PC-9 (cell line): ENCODE measurements at regions of chr14 and their contacts with region 1.

Region 1: DNA sequence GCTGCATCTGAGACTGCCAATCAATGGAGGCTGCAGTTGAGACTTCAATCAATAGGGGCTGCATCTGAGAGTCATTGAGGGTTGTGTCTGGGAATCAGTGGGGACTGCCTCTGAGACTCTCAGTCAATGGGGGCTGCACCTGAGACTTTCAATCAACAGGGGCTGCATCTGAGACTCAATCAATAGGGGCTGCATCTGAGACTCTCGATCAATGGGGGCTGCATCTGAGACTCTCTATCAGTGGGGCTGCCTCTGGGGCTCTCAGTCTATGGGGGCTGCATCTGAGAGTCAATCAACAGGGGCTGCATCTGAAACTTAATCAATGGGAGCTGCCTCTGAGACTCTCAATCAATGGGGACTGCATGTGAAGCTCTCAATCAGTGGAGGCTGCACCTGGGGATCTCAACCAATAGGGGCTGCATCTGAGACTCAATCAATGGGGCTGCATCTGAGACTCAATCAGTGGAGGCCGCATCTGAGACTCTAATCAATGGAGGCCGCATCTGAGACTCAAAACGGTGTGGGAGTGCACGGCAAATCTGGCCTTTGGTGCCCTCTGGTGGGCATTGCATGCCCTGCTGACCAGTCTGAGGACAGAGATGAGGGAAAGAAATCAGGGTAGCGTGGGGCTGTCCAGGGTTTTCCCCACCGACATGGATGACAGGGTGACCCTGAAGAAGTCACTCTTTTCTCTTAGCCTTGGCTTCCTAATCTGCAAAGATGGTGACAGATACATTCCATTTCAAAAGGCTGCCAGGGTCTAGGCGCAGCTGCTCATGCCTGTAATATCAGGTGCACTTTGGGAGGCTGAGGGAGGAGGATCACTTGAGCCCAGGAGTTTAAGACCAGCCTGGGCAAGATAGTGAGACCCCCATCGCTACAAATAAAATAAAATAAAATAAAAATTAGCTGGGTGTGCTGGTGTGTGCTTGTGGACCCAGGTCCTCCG is 41.3 kb upstream of the EIF5 start:
- DNase-seq: peak; percentile 68 to 90
- H3K4me3 ChIP-seq: no peak overlapping the region
- H3K27ac ChIP-seq: no peak overlapping the region
- H3K4me1 ChIP-seq: peaks cover 34% of the 10 kb centered on the region
- H3K27me3 ChIP-seq: no peaks in the 10 kb centered on the region
- CTCF ChIP-seq: peak; percentile 100

Region 2: GRCh38 chr14:101665515-101666078 is 1627.1 kb before region 1 on chr14:
- CTCF ChIA-PET with region 1: no interaction called
- POLR2A ChIA-PET with region 1: no interaction called
- intact Hi-C with region 1: loop called (anchors 10 kb)
- DNase-seq: peak; percentile 71 to 81
- H3K4me3 ChIP-seq: no peak overlapping the region
- H3K27ac ChIP-seq: no peak overlapping the region
- H3K4me1 ChIP-seq: no peaks in the 10 kb centered on the region
- H3K27me3 ChIP-seq: no peaks in the 10 kb centered on the region
- CTCF ChIP-seq: peak; percentile 99

Region 3: DNA sequence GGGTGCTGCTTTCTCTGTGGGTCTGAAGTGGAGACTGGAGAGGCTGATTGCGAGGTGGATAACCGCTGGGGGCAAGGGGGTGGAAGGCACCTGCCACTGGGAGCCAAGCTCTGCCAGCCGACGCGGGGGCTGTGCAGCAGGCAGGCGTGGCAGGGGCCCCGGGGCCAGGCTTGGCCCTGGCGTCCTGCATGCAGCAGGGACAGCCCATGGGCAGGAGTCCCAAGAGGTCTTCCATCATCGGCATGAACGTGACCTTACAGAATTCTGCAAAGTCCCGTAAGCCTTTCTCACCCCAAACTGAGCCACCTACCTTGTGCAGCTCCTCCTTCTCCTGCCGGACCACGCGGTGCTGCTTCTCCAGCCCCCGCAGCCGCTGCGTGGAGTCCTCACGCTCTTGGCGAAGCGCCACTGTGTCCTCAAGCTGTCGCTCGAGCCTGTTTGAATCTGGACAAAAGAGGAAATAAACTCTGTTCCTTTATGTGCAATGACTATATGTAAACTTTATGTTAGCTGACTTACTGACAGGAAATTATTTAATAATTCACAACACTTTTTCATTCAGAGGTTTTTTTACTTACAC is 318.9 kb before region 1 on chr14:
- CTCF ChIA-PET with region 1: no interaction called
- POLR2A ChIA-PET with region 1: interaction called, 3 read pairs
- intact Hi-C with region 1: loop called (anchors 5 kb)
- DNase-seq: no peak
- H3K4me3 ChIP-seq: no peak overlapping the region
- H3K27ac ChIP-seq: no peak overlapping the region
- H3K4me1 ChIP-seq: no peaks in the 10 kb centered on the region
- H3K27me3 ChIP-seq: no peaks in the 10 kb centered on the region
- CTCF ChIP-seq: no peak

Region 4: DNA sequence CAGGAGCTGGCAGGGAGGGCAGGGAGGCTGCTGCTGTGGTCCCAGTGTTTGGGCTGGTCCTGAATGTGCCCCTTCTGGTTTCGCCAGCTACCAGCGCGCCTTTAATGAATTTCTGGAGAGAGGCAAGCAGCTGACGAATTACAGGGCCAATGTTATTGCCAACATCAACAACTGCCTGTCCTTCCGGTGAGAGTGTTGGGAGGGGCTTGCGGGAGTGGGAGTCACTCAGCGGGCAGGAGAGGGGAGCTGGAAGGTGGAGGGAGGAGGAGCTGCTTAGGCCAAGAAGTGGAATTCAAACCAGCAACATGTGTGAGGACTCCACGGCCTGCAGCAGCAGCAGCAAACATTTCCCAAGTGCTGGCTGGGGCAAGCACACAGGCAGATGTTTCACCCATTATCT is 161.7 kb before region 1 on chr14:
- CTCF ChIA-PET with region 1: interaction called, 5 read pairs
- POLR2A ChIA-PET with region 1: interaction called, 20 read pairs
- intact Hi-C with region 1: loop called (anchors 1 kb)
- DNase-seq: peak; percentile 89 to 98
- H3K4me3 ChIP-seq: no peak overlapping the region
- H3K27ac ChIP-seq: peak overlapping the region; percentile 86
- H3K4me1 ChIP-seq: peaks cover 89% of the 10 kb centered on the region
- H3K27me3 ChIP-seq: no peaks in the 10 kb centered on the region
- CTCF ChIP-seq: no peak

Region 5: GRCh38 chr14:103185051-103185992 is 107.4 kb before region 1 on chr14:
- CTCF ChIA-PET with region 1: interaction called, 4 read pairs
- POLR2A ChIA-PET with region 1: no interaction called
- intact Hi-C with region 1: loop called (anchors 1 kb)
- DNase-seq: peak; percentile 49 to 96
- H3K4me3 ChIP-seq: peak overlapping the region; percentile 14; the same call in 1 of the 2 replicates
- H3K27ac ChIP-seq: peak overlapping the region; percentile 92
- H3K4me1 ChIP-seq: peaks cover 37% of the 10 kb centered on the region
- H3K27me3 ChIP-seq: no peaks in the 10 kb centered on the region
- CTCF ChIP-seq: peak; percentile 100

Region 6: GRCh38 chr14:103346286-103346685 is 53.6 kb after region 1 on chr14:
- CTCF ChIA-PET with region 1: no interaction called
- POLR2A ChIA-PET with region 1: interaction called, 5 read pairs
- intact Hi-C with region 1: loop called (anchors 5 kb)
- DNase-seq: no peak
- H3K4me3 ChIP-seq: no peak overlapping the region
- H3K27ac ChIP-seq: peak overlapping the region; percentile 18
- H3K4me1 ChIP-seq: peaks cover 6% of the 10 kb centered on the region; the same call in 1 of the 2 replicates
- H3K27me3 ChIP-seq: no peaks in the 10 kb centered on the region
- CTCF ChIP-seq: no peak

Region 7: GRCh38 chr14:103562429-103563225 is 269.9 kb after region 1 on chr14 and contains the starts of genes BAG5 and COA8:
- CTCF ChIA-PET with region 1: no interaction called
- POLR2A ChIA-PET with region 1: no interaction called
- intact Hi-C with region 1: no loop called
- DNase-seq: peak; percentile 86 to 98
- H3K4me3 ChIP-seq: peak within 1 kb of the TSS; percentile 87
- H3K27ac ChIP-seq: peak within 1 kb of the TSS; percentile 76
- H3K4me1 ChIP-seq: peaks cover 49% of the 10 kb centered on the region
- H3K27me3 ChIP-seq: no peaks in the 10 kb centered on the region
- CTCF ChIP-seq: peak; percentile 31; the same call in 1 of the 2 replicates
- total RNA-seq, gene BAG5: 61.5 and 76.5 TPM in 2 replicates
- total RNA-seq, gene COA8: 93.8 and 101 TPM in 2 replicates